Transverse colon (tissue), 4 donors: ENCODE measurements at regions of chr6 and their contacts with region 1.

Region 1: GRCh38 chr6:36759148-36759759 is 61.6 kb downstream of the RAB44 start:
- DNase-seq: peak; percentile 90
- H3K4me3 ChIP-seq: no peak overlapping the region
- H3K27ac ChIP-seq: peak overlapping the region; percentile 22 to 63 (median 31)
- H3K4me1 ChIP-seq: peaks cover 6 to 53% (median 21%) of the 10 kb centered on the region in 4 donors
- H3K27me3 ChIP-seq: no peaks in the 10 kb centered on the region
- CTCF ChIP-seq: peak; percentile 94 to 99 (median 98)
- EP300 ChIP-seq: no peak
- POLR2A ChIP-seq: no peak

Region 2: DNA sequence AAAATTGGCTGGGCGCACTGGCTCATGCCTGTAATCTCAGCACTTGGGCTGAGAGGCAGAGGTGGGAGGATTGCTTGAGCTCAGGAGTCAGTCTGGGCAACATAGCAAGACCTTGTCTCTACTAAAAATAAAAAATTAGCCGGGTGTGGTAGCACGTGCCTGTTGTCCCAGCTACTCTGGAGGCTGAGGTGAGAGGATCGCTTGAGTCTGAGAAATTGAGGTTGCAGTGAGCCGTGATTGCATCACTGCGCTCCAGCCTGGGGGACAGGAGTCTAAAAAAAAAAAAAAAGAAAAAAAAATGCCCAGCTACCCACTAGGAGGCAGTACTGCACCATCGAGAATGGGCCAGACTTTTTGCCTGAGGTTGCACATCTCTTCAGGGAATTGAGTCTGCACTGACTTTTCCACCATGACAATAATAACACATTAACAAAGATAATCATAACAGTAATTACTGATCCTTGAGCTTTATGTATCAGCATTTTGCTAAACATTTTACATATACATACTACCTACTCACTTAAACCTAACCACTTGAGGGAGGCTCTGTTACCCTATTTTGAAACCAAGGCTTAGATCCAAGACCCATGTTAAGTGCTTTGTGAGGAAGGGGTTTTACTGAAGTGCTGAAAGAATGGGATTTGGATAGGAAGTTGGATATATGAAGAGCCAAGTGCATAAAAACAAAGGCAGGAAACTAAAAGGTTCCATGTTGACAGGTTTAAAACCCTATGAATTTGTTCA is 144.1 kb before region 1 on chr6:
- in situ Hi-C with region 1: loop called in 3 of 4 experiments (anchors 10 to 25 kb)
- intact Hi-C with region 1: loop called (anchors 5 kb)
- DNase-seq: no peak
- H3K4me3 ChIP-seq: no peak overlapping the region
- H3K27ac ChIP-seq: peak overlapping the region; percentile 1 to 48 (median 22)
- H3K4me1 ChIP-seq: peaks cover 0 to 20% (median 12%) of the 10 kb centered on the region in 4 donors
- H3K27me3 ChIP-seq: no peaks in the 10 kb centered on the region
- CTCF ChIP-seq: peak; percentile 63 to 85 (median 72)
- EP300 ChIP-seq: no peak
- POLR2A ChIP-seq: no peak

Region 3: GRCh38 chr6:36623547-36624459 is 135.5 kb before region 1 on chr6:
- in situ Hi-C with region 1: loop called in 3 of 4 experiments (anchors 10 to 25 kb)
- intact Hi-C with region 1: loop called (anchors 5 kb)
- DNase-seq: peak; percentile 94
- H3K4me3 ChIP-seq: no peak overlapping the region
- H3K27ac ChIP-seq: peak overlapping the region; percentile 69 to 72 (median 70)
- H3K4me1 ChIP-seq: peaks cover 12 to 59% (median 36%) of the 10 kb centered on the region in 4 donors
- H3K27me3 ChIP-seq: no peaks in the 10 kb centered on the region
- CTCF ChIP-seq: peak; percentile 86 to 96 (median 91)
- EP300 ChIP-seq: no peak
- POLR2A ChIP-seq: peak; percentile 86

Region 4: DNA sequence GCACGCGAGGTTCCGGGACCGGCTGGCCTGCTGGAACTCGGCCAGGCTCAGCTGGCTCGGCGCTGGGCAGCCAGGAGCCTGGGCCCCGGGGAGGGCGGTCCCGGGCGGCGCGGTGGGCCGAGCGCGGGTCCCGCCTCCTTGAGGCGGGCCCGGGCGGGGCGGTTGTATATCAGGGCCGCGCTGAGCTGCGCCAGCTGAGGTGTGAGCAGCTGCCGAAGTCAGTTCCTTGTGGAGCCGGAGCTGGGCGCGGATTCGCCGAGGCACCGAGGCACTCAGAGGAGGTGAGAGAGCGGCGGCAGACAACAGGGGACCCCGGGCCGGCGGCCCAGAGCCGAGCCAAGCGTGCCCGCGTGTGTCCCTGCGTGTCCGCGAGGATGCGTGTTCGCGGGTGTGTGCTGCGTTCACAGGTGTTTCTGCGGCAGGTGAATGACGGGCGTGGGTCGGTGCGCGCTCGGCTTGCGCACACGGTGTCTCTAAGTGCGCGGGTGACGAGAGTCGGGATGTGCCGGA is 80.7 kb before region 1 on chr6 and contains the start of gene CDKN1A:
- in situ Hi-C with region 1: no loop called
- intact Hi-C with region 1: loop called (anchors 10 kb)
- DNase-seq: peak; percentile 96
- H3K4me3 ChIP-seq: peak within 1 kb of the TSS; percentile 66 to 84 (median 78)
- H3K27ac ChIP-seq: peak within 1 kb of the TSS; percentile 96 to 98 (median 97)
- H3K4me1 ChIP-seq: peaks cover 22 to 52% (median 46%) of the 10 kb centered on the region in 4 donors
- H3K27me3 ChIP-seq: no peaks in the 10 kb centered on the region
- CTCF ChIP-seq: peak in 1 of 5 experiments; percentile 31
- EP300 ChIP-seq: peak; percentile 61
- POLR2A ChIP-seq: peak; percentile 99
- total RNA-seq, gene CDKN1A: 34.6 to 613 (median 264) TPM

Region 5: GRCh38 chr6:36858407-36858981 is 99.2 kb after region 1 on chr6:
- in situ Hi-C with region 1: no loop called
- intact Hi-C with region 1: no loop called
- DNase-seq: no peak
- H3K4me3 ChIP-seq: no peak overlapping the region
- H3K27ac ChIP-seq: peak overlapping the region in 3 of 4 donors; percentile 9 to 48 (median 29)
- H3K4me1 ChIP-seq: peaks cover 0 to 3% (median 0%) of the 10 kb centered on the region in 4 donors
- H3K27me3 ChIP-seq: no peaks in the 10 kb centered on the region
- CTCF ChIP-seq: no peak
- EP300 ChIP-seq: no peak
- POLR2A ChIP-seq: no peak